Cardiac septum (tissue), 1 donor: ENCODE measurements at regions of chr7 and their contacts with region 1.

Region 1: GRCh38 chr7:38107486-38107893 is 70.6 kb upstream of the STARD3NL start:
- DNase-seq: no peak

Region 2: GRCh38 chr7:37901236-37901827 is 206.2 kb before region 1 on chr7:
- intact Hi-C with region 1: loop called (anchors 5 kb)
- DNase-seq: no peak

Region 3: GRCh38 chr7:37916673-37917660 is 190.5 kb before region 1 on chr7 and contains the start of gene SFRP4:
- intact Hi-C with region 1: loop called (anchors 5 kb)
- DNase-seq: peak; percentile 80
- total RNA-seq, gene SFRP4: 15.0 TPM

Region 4: DNA sequence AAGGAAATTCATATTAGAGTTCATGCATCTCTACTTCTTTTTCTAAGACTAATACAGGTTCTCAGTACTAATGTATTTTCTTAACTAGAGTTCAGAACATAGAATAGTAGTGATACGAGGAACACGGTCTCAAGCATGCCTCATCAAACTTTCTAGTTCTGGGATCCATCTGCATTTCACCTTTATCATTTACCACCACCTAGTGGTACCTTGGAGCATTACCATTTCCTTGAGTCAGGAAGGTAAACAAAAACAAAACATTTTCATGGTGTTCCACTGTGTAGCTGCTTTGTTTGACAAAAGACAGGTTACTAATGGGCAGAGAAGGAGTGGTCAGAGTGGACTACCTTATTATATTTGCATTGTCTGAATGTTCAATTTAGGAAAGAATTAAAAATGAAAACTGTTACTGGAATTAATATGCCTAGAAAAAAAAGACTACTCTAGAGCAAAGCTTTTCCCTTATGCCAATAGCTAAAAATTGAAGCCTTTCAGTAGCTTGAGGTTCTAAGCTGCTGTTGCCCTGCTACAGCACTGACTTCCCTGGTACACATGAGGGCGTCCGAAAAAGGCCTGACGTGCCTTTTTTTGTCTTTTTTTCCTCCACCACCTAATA is 115.1 kb after region 1 on chr7:
- intact Hi-C with region 1: loop called (anchors 2 kb)
- DNase-seq: no peak

Region 5: GRCh38 chr7:38318803-38319416 is 211.4 kb after region 1 on chr7:
- intact Hi-C with region 1: loop called (anchors 5 kb)
- DNase-seq: no peak